ENCODE measurements at regions of chr10 and their contacts with region 1.

Region 1: DNA sequence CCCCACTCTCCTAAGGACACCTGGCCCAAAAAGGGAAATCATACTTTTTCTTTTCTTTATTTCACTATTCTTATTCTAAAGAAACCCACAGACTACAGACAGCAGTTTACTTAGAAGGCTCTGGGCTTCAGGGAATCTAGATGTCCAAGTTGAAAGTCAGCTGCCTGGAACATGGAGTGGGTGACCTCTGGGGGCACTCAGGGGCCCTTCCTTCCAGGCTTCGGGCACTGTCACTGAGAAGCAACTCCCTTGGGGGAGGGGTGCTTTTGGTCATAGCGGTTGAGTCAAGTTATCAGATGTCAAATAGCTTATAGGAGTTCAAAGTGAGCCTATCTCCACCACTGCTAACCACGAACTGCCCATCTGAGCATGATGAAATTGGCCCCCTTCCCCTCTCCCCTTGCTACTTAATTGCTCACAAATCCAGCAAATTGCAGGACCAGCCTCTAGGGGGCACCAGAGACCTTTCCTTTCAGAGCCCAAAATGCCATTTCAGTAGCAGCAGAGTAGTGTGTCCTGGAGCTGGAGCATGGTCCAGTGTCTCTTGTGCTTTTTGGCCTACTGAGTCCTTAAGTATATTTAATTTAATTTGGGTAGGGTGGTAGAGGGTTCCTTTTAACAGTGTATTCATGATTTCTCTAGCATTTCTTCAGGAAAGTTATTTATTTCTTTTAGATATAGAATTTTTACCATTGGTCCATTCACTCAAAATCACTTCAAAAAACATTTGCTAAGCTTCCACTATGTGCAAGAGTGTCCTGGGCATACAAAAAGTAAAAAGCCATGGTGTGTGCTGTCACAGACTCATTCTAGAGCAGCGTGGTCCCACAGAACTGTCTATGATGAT is 463.8 kb downstream of the KCNMA1 start:
- DNase-seq: peak; percentile 63 to 81
- ATAC-seq: peak; percentile 68 to 81 (median 79)
- H3K4me3 ChIP-seq: no peak overlapping the region
- H3K4me3 Mint-ChIP-seq: no peak overlapping the region
- H3K27ac ChIP-seq: no peak overlapping the region
- H3K27ac Mint-ChIP-seq: no peak overlapping the region
- H3K4me1 ChIP-seq: no peaks in the 10 kb centered on the region
- H3K4me1 Mint-ChIP-seq: no peaks in the 10 kb centered on the region
- H3K27me3 ChIP-seq: no peaks in the 10 kb centered on the region
- H3K27me3 Mint-ChIP-seq: peaks cover 3 to 10% of the 10 kb centered on the region in 2 donors
- CTCF ChIP-seq: peak; percentile 97

Region 2: GRCh38 chr10:77201135-77202106 is 27.6 kb after region 1 on chr10:
- intact Hi-C with region 1: no loop called
- DNase-seq: no peak
- ATAC-seq: no peak
- H3K4me3 ChIP-seq: no peak overlapping the region
- H3K4me3 Mint-ChIP-seq: no peak overlapping the region
- H3K27ac ChIP-seq: no peak overlapping the region
- H3K27ac Mint-ChIP-seq: no peak overlapping the region
- H3K4me1 ChIP-seq: no peaks in the 10 kb centered on the region
- H3K4me1 Mint-ChIP-seq: peaks cover 0 to 5% of the 10 kb centered on the region in 2 donors
- H3K27me3 ChIP-seq: no peaks in the 10 kb centered on the region
- H3K27me3 Mint-ChIP-seq: peaks cover 29 to 77% of the 10 kb centered on the region in 2 donors
- CTCF ChIP-seq: no peak

Region 3: DNA sequence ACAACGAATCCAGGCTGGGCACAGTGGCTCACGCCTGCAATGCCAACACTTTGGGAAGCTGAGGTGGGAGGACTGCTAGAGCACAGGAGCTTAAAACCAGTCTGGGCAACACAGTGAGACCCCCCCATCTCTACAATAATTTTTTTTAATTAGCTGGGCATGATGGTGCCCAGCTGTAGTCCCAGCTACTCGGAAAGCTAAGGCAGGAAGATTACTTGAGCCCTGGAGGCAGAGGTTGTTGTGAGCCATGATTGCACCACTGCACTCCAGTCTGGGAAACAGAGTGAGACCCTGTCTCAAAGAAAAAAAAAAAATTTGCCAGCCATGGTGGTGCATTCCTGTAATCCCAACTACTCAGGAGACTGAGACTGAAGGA is 67.5 kb after region 1 on chr10:
- intact Hi-C with region 1: no loop called
- DNase-seq: no peak
- ATAC-seq: no peak
- H3K4me3 ChIP-seq: no peak overlapping the region
- H3K4me3 Mint-ChIP-seq: no peak overlapping the region
- H3K27ac ChIP-seq: no peak overlapping the region
- H3K27ac Mint-ChIP-seq: no peak overlapping the region
- H3K4me1 ChIP-seq: no peaks in the 10 kb centered on the region
- H3K4me1 Mint-ChIP-seq: peaks cover 0 to 5% of the 10 kb centered on the region in 2 donors
- H3K27me3 ChIP-seq: no peaks in the 10 kb centered on the region
- H3K27me3 Mint-ChIP-seq: no peaks in the 10 kb centered on the region
- CTCF ChIP-seq: no peak

Region 4: GRCh38 chr10:77251297-77252013 is 77.6 kb after region 1 on chr10:
- intact Hi-C with region 1: loop called (anchors 5 kb)
- DNase-seq: peak in 1 of 2 donors; percentile 54
- ATAC-seq: peak; percentile 50 to 88 (median 72)
- H3K4me3 ChIP-seq: no peak overlapping the region
- H3K4me3 Mint-ChIP-seq: no peak overlapping the region
- H3K27ac ChIP-seq: no peak overlapping the region
- H3K27ac Mint-ChIP-seq: peak overlapping the region in 1 of 2 donors; percentile 30
- H3K4me1 ChIP-seq: peaks cover 15% of the 10 kb centered on the region
- H3K4me1 Mint-ChIP-seq: peaks cover 19 to 36% of the 10 kb centered on the region in 2 donors
- H3K27me3 ChIP-seq: no peaks in the 10 kb centered on the region
- H3K27me3 Mint-ChIP-seq: peaks cover 0 to 3% of the 10 kb centered on the region in 2 donors
- CTCF ChIP-seq: peak; percentile 77

Region 5: DNA sequence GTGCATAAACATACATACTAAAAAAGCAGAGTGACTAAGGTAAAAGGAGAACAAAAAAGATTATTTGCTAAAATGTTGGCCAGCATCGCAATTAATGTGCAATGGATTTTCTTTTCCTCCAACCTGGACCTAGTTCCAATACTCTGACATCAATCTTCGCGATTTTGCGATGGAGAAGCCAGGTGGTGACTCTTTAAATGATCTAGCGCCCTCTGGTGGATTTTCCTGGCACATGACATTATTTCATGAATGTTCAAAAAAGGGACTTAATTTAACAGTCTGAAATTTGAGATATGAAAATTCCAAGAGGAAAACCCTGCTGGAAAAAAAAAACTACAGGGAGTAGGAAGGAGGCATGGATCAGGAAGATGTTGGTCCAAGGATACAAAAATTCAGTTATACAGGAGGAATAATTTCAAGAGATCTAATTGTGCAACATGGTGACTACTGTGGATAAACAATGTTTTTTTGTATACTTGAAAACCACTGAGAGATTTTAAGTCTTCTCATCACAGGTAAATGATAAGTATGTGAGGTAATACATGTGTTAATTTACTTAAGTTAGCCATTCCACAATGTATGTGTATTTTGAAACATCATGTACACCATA is 468.1 kb after region 1 on chr10:
- intact Hi-C with region 1: loop called (anchors 1 kb)
- DNase-seq: peak in 1 of 2 donors; percentile 75
- ATAC-seq: no peak
- H3K4me3 ChIP-seq: no peak overlapping the region
- H3K4me3 Mint-ChIP-seq: no peak overlapping the region
- H3K27ac ChIP-seq: no peak overlapping the region
- H3K27ac Mint-ChIP-seq: no peak overlapping the region
- H3K4me1 ChIP-seq: no peaks in the 10 kb centered on the region
- H3K4me1 Mint-ChIP-seq: peaks cover 5 to 6% of the 10 kb centered on the region in 2 donors
- H3K27me3 ChIP-seq: peaks cover 10% of the 10 kb centered on the region
- H3K27me3 Mint-ChIP-seq: peaks cover 38 to 51% of the 10 kb centered on the region in 2 donors
- CTCF ChIP-seq: peak; percentile 94

Region 6: DNA sequence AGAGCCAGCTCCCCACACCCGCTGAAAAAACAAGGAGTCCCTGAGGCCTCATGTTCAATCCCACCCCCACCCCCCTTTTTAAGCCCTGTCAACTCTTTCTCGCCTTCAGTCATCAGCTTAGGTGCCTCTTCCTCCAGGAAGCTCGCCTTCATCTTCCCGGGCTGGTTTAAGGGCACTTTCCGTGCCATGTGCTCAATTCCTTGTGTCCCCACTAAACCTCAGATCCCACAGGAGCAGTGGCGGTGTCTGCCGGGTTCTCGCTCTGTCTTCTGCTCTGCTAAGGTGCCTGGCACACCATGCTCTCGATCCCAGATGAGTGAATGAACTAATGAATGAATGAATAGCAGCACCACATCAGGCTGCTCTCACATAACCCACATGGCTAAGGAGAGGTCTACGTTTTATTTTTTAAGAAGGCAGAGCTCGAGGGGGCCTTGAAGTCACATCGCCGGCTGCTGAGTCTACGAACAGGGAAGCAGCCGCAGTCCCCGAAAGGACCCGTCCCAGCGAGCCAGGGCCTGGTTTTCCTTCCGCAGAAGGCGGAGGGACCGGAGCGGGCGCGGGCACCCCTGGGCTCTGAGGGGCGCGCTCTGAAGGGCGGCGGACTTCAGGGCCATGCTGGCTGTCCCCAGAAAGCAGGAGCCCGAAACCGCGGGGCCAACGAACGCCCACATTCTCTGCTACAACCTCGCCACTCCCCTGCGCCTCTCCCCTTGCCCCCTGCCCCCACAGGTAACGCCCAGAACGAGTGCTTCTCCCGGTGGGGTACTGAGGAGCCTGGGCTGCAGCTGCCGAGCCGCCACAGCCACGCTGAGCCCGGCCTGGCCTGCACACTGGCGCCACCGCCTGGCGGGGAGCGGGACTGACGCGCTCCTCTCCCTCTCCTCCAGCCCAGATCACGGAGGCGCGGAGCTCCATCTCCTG is 537.2 kb after region 1 on chr10:
- intact Hi-C with region 1: loop called (anchors 1 kb)
- DNase-seq: peak; percentile 74 to 80
- ATAC-seq: peak; percentile 95 to 99 (median 99)
- H3K4me3 ChIP-seq: no peak overlapping the region
- H3K4me3 Mint-ChIP-seq: peak overlapping the region; percentile 75
- H3K27ac ChIP-seq: no peak overlapping the region
- H3K27ac Mint-ChIP-seq: no peak overlapping the region
- H3K4me1 ChIP-seq: peaks cover 18% of the 10 kb centered on the region
- H3K4me1 Mint-ChIP-seq: peaks cover 6 to 12% of the 10 kb centered on the region in 2 donors
- H3K27me3 ChIP-seq: peaks cover 14% of the 10 kb centered on the region
- H3K27me3 Mint-ChIP-seq: peaks cover 28 to 31% of the 10 kb centered on the region in 2 donors
- CTCF ChIP-seq: peak; percentile 91